Heart left ventricle (tissue), 16 donors: ENCODE measurements at regions of chr6 and their contacts with region 1.

Region 1: GRCh38 chr6:99841297-99841696 is 152.7 kb downstream of the MCHR2 start:
- DNase-seq: no peak
- ATAC-seq: no peak
- H3K4me3 ChIP-seq: no peak overlapping the region
- H3K27ac ChIP-seq: no peak overlapping the region
- H3K4me1 ChIP-seq: no peaks in the 10 kb centered on the region
- H3K27me3 ChIP-seq: peaks cover 0 to 2% (median 0%) of the 10 kb centered on the region in 9 donors
- CTCF ChIP-seq: no peak
- POLR2A ChIP-seq: no peak

Region 2: GRCh38 chr6:99979953-99980352 is 138.7 kb after region 1 on chr6:
- intact Hi-C with region 1: no loop called
- DNase-seq: no peak
- ATAC-seq: no peak
- H3K4me3 ChIP-seq: no peak overlapping the region
- H3K27ac ChIP-seq: no peak overlapping the region
- H3K4me1 ChIP-seq: no peaks in the 10 kb centered on the region
- H3K27me3 ChIP-seq: no peaks in the 10 kb centered on the region
- CTCF ChIP-seq: no peak
- POLR2A ChIP-seq: no peak

Region 3: GRCh38 chr6:100455230-100456124 is 614.2 kb after region 1 on chr6:
- intact Hi-C with region 1: loop called in 1 of 10 experiments (anchors 10 kb)
- DNase-seq: no peak
- ATAC-seq: no peak
- H3K4me3 ChIP-seq: peak overlapping the region in 1 of 12 donors; percentile 3
- H3K27ac ChIP-seq: no peak overlapping the region
- H3K4me1 ChIP-seq: peaks cover 0 to 12% (median 0%) of the 10 kb centered on the region in 12 donors
- H3K27me3 ChIP-seq: peaks cover 75 to 99% (median 91%) of the 10 kb centered on the region in 9 donors
- CTCF ChIP-seq: no peak
- POLR2A ChIP-seq: no peak